Heart right ventricle (tissue), 16 donors: ENCODE measurements at regions of chr17 and their contacts with region 1.

Region 1: GRCh38 chr17:69078864-69079263 is 18.1 kb upstream of the ABCA9 start:
- DNase-seq: no peak
- ATAC-seq: no peak
- H3K4me3 ChIP-seq: no peak overlapping the region
- H3K27ac ChIP-seq: no peak overlapping the region
- H3K4me1 ChIP-seq: no peaks in the 10 kb centered on the region
- H3K27me3 ChIP-seq: no peaks in the 10 kb centered on the region
- CTCF ChIP-seq: no peak

Region 2: DNA sequence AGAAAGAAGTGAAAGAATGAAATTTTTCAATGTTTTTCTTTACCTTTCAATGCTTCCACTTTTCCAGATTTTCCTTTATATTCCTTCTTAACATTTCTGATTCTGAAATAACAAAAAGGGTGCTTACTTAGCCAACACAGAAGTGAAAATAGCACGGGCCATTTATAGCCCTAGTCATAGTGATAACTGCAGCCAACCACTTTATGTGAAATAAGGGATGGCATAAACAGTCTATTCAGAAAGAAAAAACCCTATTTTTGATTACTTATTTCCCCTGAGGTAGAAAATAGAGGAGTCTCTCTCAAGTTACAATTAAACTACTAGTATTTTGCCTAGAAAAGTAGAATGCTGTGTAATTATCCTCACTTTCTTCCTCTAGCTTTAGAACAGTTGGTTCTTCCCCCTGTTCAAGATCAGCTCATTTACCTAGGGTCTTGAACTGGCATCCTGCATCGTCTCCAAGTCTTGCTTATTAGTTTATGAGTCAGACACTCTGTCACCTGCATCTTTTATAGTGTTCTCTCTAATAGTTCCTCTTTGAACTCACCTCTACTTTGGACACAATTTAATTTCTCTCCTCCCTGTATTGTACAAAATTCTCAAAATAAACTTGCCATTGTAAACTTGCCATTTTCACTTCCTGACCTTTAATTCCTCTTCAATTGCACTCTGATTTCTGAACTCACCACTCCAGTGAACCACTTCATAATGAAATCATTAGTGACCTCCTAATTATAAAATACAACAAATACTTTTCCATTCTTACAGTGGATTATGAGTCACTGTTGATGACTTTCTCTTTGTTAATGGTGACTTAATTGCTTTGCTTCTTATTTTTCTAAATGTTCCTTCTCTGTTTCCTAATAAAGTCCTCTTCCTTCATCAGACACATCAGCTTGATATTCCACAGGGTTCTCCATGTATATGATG is 39.3 kb after region 1 on chr17:
- intact Hi-C with region 1: loop called in 1 of 10 experiments (anchors 2 kb)
- DNase-seq: no peak
- ATAC-seq: peak in 3 of 8 donors; percentile 48 to 75 (median 67)
- H3K4me3 ChIP-seq: peak overlapping the region in 4 of 10 donors; percentile 5 to 26 (median 16)
- H3K27ac ChIP-seq: peak overlapping the region in 6 of 10 donors; percentile 6 to 54 (median 23)
- H3K4me1 ChIP-seq: peaks cover 0 to 36% (median 13%) of the 10 kb centered on the region in 9 donors
- H3K27me3 ChIP-seq: no peaks in the 10 kb centered on the region
- CTCF ChIP-seq: no peak